HepG2 (cell line): ENCODE measurements at regions of chr17 and their contacts with region 1.

Region 1: DNA sequence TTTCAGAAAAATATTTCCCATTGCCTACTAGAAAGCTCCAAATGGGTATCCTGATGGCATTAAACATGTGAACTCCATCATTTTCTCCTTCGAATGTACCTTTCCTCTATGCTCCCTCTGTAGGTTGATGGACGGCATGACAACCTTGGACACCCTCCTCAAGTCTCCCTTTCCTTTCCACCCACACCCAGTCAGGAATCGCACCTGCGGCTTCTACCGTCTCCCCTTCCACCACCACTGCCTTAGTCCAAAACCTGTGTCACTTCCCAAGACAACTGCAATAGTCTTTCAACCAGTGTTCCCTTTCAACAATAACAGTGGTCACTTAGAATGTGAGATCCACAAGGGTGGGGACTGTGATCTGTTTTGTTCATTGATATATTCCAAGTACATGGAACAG is 233.1 kb upstream of the AXIN2 start:
- DNase-seq: peak; percentile 63
- ATAC-seq: peak; percentile 84
- H3K4me3 ChIP-seq: no peak overlapping the region
- H3K27ac ChIP-seq: no peak overlapping the region
- H3K4me1 ChIP-seq: 0 out of 2 replicates have a peak, but pooled peaks cover 5% of the 10 kb centered on the region
- H3K27me3 ChIP-seq: no peaks in the 10 kb centered on the region
- CTCF ChIP-seq: peak; percentile 79
- EP300 ChIP-seq: no peak
- POLR2A ChIP-seq: no peak
- RAD21 ChIP-seq: peak; percentile 54; the same call in 1 of the 2 replicates

Region 2: GRCh38 chr17:65418628-65419027 is 375.9 kb before region 1 on chr17:
- CTCF ChIA-PET with region 1: no interaction called
- POLR2A ChIA-PET with region 1: no interaction called
- in situ Hi-C with region 1: no loop called
- intact Hi-C with region 1: loop called (anchors 5 kb)
- DNase-seq: no peak
- ATAC-seq: peak; percentile 52; the same call in 2 of the 3 replicates
- H3K4me3 ChIP-seq: no peak overlapping the region
- H3K27ac ChIP-seq: no peak overlapping the region
- H3K4me1 ChIP-seq: no peaks in the 10 kb centered on the region
- H3K27me3 ChIP-seq: no peaks in the 10 kb centered on the region
- CTCF ChIP-seq: peak; percentile 60
- EP300 ChIP-seq: no peak
- POLR2A ChIP-seq: no peak
- RAD21 ChIP-seq: no peak

Region 3: DNA sequence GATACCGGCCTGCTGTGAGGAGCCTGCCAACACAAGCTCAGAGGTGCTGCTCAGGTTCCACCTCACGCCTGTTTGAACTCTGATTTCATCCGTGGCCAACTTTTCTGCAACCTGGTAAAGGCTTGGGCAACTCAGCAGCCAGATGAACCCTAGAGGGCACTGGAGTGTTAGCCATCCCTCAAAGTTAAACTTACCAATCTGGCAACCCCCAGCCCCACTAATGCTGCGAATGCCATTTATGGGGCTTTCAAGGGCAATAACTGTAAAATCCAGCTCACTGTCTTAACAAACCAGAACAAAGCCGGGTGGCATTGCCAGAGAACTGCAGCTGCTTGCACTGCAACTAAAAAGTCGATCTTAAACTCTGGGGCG is 338.6 kb before region 1 on chr17:
- CTCF ChIA-PET with region 1: no interaction called
- POLR2A ChIA-PET with region 1: no interaction called
- in situ Hi-C with region 1: no loop called
- intact Hi-C with region 1: loop called (anchors 5 kb)
- DNase-seq: peak; percentile 45
- ATAC-seq: peak; percentile 87
- H3K4me3 ChIP-seq: peak overlapping the region in 1 of 3 experiments; percentile 34; a peak in 1 of 6 replicates
- H3K27ac ChIP-seq: no peak overlapping the region
- H3K4me1 ChIP-seq: peaks cover 21% of the 10 kb centered on the region
- H3K27me3 ChIP-seq: peaks cover 6 to 26% of the 10 kb centered on the region in 2 experiments; a peak in 3 of 5 replicates
- CTCF ChIP-seq: peak; percentile 82
- EP300 ChIP-seq: no peak
- POLR2A ChIP-seq: no peak
- RAD21 ChIP-seq: peak; percentile 74

Region 4: GRCh38 chr17:65633970-65634369 is 160.6 kb before region 1 on chr17:
- CTCF ChIA-PET with region 1: no interaction called
- POLR2A ChIA-PET with region 1: no interaction called
- in situ Hi-C with region 1: no loop called
- intact Hi-C with region 1: loop called (anchors 5 kb)
- DNase-seq: peak; percentile 89
- ATAC-seq: peak; percentile 55
- H3K4me3 ChIP-seq: peak overlapping the region in 1 of 3 experiments; percentile 2; a peak in 2 of 6 replicates
- H3K27ac ChIP-seq: no peak overlapping the region
- H3K4me1 ChIP-seq: peaks cover 61% of the 10 kb centered on the region
- H3K27me3 ChIP-seq: no peaks in the 10 kb centered on the region
- CTCF ChIP-seq: no peak
- EP300 ChIP-seq: peak in 1 of 2 experiments; percentile 84; a peak in 2 of 4 replicates
- POLR2A ChIP-seq: no peak
- RAD21 ChIP-seq: no peak

Region 5: GRCh38 chr17:65763786-65764185 is 30.8 kb before region 1 on chr17:
- CTCF ChIA-PET with region 1: no interaction called
- POLR2A ChIA-PET with region 1: no interaction called
- in situ Hi-C with region 1: no loop called
- intact Hi-C with region 1: no loop called
- DNase-seq: no peak
- ATAC-seq: no peak
- H3K4me3 ChIP-seq: no peak overlapping the region
- H3K27ac ChIP-seq: no peak overlapping the region
- H3K4me1 ChIP-seq: peaks cover 19% of the 10 kb centered on the region
- H3K27me3 ChIP-seq: no peaks in the 10 kb centered on the region
- CTCF ChIP-seq: no peak
- EP300 ChIP-seq: no peak
- POLR2A ChIP-seq: no peak
- RAD21 ChIP-seq: no peak